ENCODE measurements at regions of chr5 and their contacts with region 1.

Region 1: DNA sequence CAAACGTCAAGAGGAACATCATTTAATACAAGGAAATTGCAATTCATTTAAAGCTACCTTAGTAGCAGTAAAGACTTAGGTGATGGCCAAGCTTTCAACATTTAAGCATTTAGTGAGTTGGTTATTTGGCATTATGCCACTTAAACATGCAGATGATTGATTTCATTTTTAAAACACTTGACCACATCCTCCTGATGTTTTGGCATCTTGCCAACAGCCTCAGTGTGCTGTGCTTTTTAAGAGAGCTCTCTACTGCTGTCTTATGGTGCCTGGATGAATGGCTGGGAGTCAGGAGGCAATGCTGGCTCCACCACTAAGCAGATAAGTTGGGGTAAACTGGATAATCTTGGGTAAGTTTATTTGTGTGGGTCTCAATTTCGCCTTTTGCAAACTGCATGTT is 364.5 kb downstream of the MAN2A1 start:
- DNase-seq: peak; percentile 91
- H3K4me3 Mint-ChIP-seq: peak overlapping the region; percentile 12
- H3K27ac Mint-ChIP-seq: peak overlapping the region; percentile 87
- H3K4me1 Mint-ChIP-seq: peaks cover 37% of the 10 kb centered on the region
- H3K27me3 Mint-ChIP-seq: no peaks in the 10 kb centered on the region

Region 2: DNA sequence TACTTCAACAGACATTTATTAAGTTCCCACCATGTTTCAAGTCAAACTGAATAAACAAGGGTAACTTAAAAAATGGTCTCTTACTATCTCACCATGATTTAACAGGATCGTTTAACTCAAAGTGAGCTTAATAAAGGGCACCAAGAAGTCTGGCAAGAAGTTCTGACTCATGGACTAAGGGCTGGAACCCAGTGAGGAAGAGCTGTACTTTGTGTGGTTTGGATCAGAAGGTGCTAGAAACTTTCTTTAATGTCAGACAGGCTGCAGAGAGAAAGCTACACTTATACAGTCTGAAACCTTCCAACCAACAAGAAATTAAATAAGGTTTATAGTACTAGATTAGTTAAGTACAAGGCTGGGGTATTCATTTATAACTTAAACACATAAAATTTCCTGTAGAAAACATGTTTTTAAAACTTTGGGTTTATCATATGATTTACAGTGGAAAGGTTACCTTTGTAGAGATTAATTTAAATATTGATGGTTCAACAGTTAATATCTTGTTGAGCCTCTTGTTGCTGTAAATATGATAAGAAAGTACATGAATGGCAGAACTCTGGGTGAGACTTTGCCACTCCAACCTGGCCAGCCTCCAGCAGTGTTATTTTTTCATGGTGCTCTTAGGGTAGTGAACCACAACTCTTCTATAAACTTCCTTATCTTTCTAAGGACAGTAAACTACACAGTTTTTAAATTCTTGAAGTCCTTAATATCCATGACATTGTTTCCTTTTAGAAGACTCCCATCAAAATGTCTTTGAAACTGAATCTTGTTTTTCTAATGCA is 201.7 kb before region 1 on chr5:
- CTCF ChIA-PET with region 1: no interaction called
- intact Hi-C with region 1: loop called (anchors 1 kb)
- DNase-seq: peak; percentile 30
- H3K4me3 Mint-ChIP-seq: no peak overlapping the region
- H3K27ac Mint-ChIP-seq: peak overlapping the region; percentile 54
- H3K4me1 Mint-ChIP-seq: peaks cover 75% of the 10 kb centered on the region
- H3K27me3 Mint-ChIP-seq: no peaks in the 10 kb centered on the region

Region 3: GRCh38 chr5:109936996-109937395 is 117.2 kb before region 1 on chr5:
- CTCF ChIA-PET with region 1: no interaction called
- intact Hi-C with region 1: loop called (anchors 1 kb)
- DNase-seq: peak; percentile 81
- H3K4me3 Mint-ChIP-seq: peak overlapping the region; percentile 17
- H3K27ac Mint-ChIP-seq: peak overlapping the region; percentile 80
- H3K4me1 Mint-ChIP-seq: peaks cover 29% of the 10 kb centered on the region
- H3K27me3 Mint-ChIP-seq: no peaks in the 10 kb centered on the region

Region 4: GRCh38 chr5:109996246-109996645 is 58.0 kb before region 1 on chr5:
- CTCF ChIA-PET with region 1: no interaction called
- intact Hi-C with region 1: loop called (anchors 1 kb)
- DNase-seq: no peak
- H3K4me3 Mint-ChIP-seq: no peak overlapping the region
- H3K27ac Mint-ChIP-seq: no peak overlapping the region
- H3K4me1 Mint-ChIP-seq: peaks cover 12% of the 10 kb centered on the region
- H3K27me3 Mint-ChIP-seq: no peaks in the 10 kb centered on the region

Region 5: GRCh38 chr5:110070836-110071235 is 16.6 kb after region 1 on chr5:
- CTCF ChIA-PET with region 1: no interaction called
- intact Hi-C with region 1: no loop called
- DNase-seq: no peak
- H3K4me3 Mint-ChIP-seq: no peak overlapping the region
- H3K27ac Mint-ChIP-seq: no peak overlapping the region
- H3K4me1 Mint-ChIP-seq: peaks cover 6% of the 10 kb centered on the region
- H3K27me3 Mint-ChIP-seq: peaks cover under 1% of the 10 kb centered on the region

Region 6: DNA sequence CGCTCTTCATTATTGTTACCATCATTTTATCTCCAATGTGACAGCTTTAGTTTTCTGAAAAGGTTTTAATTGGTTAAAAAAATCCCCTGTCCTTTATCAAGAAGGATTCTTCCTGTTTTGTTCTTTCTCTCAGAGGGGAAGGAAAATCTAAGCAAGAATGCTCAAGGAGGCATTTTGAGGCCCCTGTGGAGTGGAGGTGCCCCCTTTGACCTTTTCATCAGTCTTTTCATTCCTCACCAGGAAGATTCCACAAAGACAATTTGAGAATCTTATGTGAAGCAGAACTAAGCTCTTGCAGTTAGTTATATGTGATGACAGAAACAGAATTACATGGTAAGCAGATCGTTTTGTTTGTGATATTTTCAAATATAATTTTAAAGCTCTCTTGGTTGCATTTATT is 125.1 kb after region 1 on chr5:
- CTCF ChIA-PET with region 1: no interaction called
- intact Hi-C with region 1: no loop called
- DNase-seq: no peak
- H3K4me3 Mint-ChIP-seq: no peak overlapping the region
- H3K27ac Mint-ChIP-seq: no peak overlapping the region
- H3K4me1 Mint-ChIP-seq: peaks cover 8% of the 10 kb centered on the region
- H3K27me3 Mint-ChIP-seq: no peaks in the 10 kb centered on the region

Region 7: DNA sequence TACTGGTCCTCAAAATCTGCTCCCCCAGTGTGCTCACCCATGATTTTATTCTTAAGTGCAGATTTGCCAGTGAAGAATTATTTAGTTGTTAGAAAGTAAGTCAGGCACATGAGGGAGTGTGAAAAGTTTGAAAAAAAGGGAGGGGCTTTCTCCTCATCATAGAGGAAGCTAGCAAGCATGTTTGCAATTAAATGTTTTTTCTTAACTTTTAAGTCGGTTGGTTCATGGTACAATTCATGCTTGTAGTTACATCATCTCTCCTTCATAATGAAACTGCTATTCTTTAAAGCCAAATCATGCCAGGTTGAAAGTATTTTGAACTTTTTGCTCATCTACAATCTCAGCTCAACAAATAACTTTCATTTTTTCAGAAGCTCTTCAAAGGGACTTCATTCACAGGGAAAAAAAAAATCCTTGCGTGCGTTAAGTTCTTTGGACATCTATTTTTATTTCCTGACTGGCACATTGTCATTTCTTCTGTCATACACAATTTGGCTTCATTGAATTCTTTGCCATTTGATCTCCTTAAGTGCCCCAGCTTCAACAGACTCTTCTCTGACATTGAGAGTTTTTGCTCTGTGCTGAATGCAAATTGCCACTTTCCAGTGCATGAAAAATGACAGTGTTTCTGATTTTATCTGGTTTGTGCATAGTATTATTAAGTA is 215.4 kb after region 1 on chr5:
- CTCF ChIA-PET with region 1: no interaction called
- intact Hi-C with region 1: loop called (anchors 1 kb)
- DNase-seq: no peak
- H3K4me3 Mint-ChIP-seq: peak overlapping the region; percentile 3
- H3K27ac Mint-ChIP-seq: peak overlapping the region; percentile 73
- H3K4me1 Mint-ChIP-seq: peaks cover 12% of the 10 kb centered on the region
- H3K27me3 Mint-ChIP-seq: no peaks in the 10 kb centered on the region

Region 8: DNA sequence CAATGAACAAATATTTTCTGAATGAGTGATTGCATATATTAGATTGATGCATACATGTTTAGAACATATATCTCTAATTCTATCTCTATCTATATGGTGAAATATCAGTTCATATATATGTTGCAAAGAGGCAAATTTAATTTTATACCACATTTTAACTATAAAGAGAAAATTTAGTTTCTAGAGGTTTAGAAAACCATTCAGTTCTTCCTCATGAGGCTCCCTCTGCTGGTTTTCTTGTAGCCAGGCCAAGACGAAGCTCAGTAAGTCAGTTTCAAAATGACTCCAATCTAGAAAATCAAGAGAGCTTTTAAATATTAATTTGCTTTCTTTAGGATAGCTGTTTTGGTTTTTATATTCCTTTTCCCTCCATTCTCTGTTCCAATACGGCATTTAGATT is 360.1 kb after region 1 on chr5:
- CTCF ChIA-PET with region 1: no interaction called
- intact Hi-C with region 1: loop called (anchors 2 kb)
- DNase-seq: peak; percentile 10
- H3K4me3 Mint-ChIP-seq: no peak overlapping the region
- H3K27ac Mint-ChIP-seq: no peak overlapping the region
- H3K4me1 Mint-ChIP-seq: peaks cover 11% of the 10 kb centered on the region
- H3K27me3 Mint-ChIP-seq: no peaks in the 10 kb centered on the region